Prostate gland (tissue), 2 donors: ENCODE measurements at regions of chr1 and their contacts with region 1.

Region 1: GRCh38 chr1:31182352-31182751 is 57.3 kb downstream of the NKAIN1 start:
- DNase-seq: peak; percentile 64
- H3K4me3 ChIP-seq: peak overlapping the region in 1 of 2 donors; percentile 20
- H3K27ac ChIP-seq: no peak overlapping the region
- H3K4me1 ChIP-seq: peaks cover 3% of the 10 kb centered on the region
- H3K27me3 ChIP-seq: no peaks in the 10 kb centered on the region
- CTCF ChIP-seq: peak in 3 of 4 experiments; percentile 12 to 58 (median 17)
- POLR2A ChIP-seq: peak; percentile 29

Region 2: DNA sequence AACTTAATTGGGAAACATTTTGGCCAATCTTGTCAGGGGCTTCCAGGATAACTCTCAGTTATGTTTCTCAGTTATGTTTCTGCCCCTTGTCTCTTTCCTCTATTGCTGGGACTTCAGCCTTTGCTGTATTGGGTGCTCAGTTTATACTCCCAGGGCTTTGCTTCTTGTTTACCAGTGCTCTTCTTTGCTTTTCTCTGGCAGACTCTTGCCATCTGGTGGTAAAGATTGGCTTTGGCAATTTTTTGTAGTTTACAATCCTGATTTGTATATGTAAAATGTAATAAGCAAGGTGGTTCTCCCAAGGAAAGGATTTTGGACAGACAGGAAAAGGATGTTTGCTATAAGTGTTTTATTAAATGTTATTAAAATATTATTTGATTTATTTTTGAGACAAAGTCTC is 152.7 kb after region 1 on chr1:
- intact Hi-C with region 1: loop called (anchors 5 kb)
- DNase-seq: peak; percentile 36
- H3K4me3 ChIP-seq: no peak overlapping the region
- H3K27ac ChIP-seq: no peak overlapping the region
- H3K4me1 ChIP-seq: no peaks in the 10 kb centered on the region
- H3K27me3 ChIP-seq: no peaks in the 10 kb centered on the region
- CTCF ChIP-seq: peak in 3 of 4 experiments; percentile 62 to 75 (median 72)
- POLR2A ChIP-seq: no peak

Region 3: GRCh38 chr1:31422505-31423319 is 240.4 kb after region 1 on chr1:
- intact Hi-C with region 1: loop called (anchors 2 kb)
- DNase-seq: peak; percentile 58
- H3K4me3 ChIP-seq: no peak overlapping the region
- H3K27ac ChIP-seq: peak overlapping the region; percentile 24 to 47
- H3K4me1 ChIP-seq: no peaks in the 10 kb centered on the region
- H3K27me3 ChIP-seq: no peaks in the 10 kb centered on the region
- CTCF ChIP-seq: peak; percentile 80 to 96 (median 90)
- POLR2A ChIP-seq: no peak

Region 4: DNA sequence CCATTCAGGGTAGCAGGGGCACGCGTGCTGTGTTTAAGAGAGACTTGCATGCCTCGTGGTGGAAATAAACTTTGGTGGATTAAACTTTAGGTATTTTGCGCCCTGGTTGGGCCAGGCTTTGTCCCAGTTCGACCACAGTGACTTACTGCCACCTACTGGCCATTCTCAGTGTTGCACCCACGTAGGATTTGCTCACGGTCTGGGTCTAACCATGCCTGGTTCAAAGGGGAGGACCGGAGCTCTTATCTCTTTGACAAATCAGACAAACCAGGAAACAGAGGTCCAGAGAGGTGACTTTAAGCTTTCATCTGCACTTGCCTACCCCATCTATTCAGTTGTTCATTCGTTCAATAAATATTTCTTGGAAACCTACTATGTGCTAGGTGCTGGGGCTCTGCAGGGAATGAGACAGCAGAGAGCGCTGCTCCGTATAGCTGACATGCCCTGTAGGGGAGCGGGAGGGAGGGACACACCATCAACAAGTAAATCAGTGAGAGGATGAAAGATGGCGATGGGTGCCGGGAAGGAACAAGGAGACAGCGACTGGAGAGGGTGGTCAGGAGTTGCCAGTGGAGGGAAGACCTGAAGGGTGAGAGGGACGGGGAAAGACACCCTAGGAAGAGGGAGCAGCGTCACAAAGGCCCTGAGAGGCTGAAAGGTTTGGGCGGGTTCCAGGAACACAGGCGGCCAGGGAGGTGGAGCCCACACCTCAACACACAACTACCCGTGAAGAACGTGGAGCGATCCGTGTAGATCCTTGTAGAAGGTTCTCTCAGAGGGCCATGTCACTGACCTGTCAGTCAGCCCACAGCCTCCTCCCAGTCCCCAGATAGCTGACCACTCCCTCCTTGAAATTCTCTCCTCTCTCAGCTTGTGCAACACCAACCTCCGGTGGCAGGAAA is 366.8 kb after region 1 on chr1:
- intact Hi-C with region 1: loop called (anchors 10 kb)
- DNase-seq: peak; percentile 83
- H3K4me3 ChIP-seq: no peak overlapping the region
- H3K27ac ChIP-seq: no peak overlapping the region
- H3K4me1 ChIP-seq: peaks cover 6% of the 10 kb centered on the region
- H3K27me3 ChIP-seq: no peaks in the 10 kb centered on the region
- CTCF ChIP-seq: peak; percentile 91 to 99 (median 94)
- POLR2A ChIP-seq: no peak